Vagina (tissue), 2 donors: ENCODE measurements at regions of chr1 and their contacts with region 1.

Region 1: GRCh38 chr1:115456441-115456961 is 118.5 kb upstream of the NGF start:
- DNase-seq: no peak
- H3K4me3 ChIP-seq: no peak overlapping the region
- H3K27ac ChIP-seq: no peak overlapping the region
- H3K4me1 ChIP-seq: no peaks in the 10 kb centered on the region
- H3K27me3 ChIP-seq: no peaks in the 10 kb centered on the region
- CTCF ChIP-seq: no peak
- POLR2A ChIP-seq: no peak

Region 2: GRCh38 chr1:115356356-115356755 is 100.1 kb before region 1 on chr1:
- intact Hi-C with region 1: loop called (anchors 10 kb)
- DNase-seq: no peak
- H3K4me3 ChIP-seq: no peak overlapping the region
- H3K27ac ChIP-seq: no peak overlapping the region
- H3K4me1 ChIP-seq: peaks cover 5% of the 10 kb centered on the region
- H3K27me3 ChIP-seq: no peaks in the 10 kb centered on the region
- CTCF ChIP-seq: no peak
- POLR2A ChIP-seq: no peak